Activated CD4-positive, alpha-beta T cell treated with anti-CD3 and anti-CD28 coated beads for 36 hours (primary cell): ENCODE measurements at regions of chr13 and their contacts with region 1.

Region 1: DNA sequence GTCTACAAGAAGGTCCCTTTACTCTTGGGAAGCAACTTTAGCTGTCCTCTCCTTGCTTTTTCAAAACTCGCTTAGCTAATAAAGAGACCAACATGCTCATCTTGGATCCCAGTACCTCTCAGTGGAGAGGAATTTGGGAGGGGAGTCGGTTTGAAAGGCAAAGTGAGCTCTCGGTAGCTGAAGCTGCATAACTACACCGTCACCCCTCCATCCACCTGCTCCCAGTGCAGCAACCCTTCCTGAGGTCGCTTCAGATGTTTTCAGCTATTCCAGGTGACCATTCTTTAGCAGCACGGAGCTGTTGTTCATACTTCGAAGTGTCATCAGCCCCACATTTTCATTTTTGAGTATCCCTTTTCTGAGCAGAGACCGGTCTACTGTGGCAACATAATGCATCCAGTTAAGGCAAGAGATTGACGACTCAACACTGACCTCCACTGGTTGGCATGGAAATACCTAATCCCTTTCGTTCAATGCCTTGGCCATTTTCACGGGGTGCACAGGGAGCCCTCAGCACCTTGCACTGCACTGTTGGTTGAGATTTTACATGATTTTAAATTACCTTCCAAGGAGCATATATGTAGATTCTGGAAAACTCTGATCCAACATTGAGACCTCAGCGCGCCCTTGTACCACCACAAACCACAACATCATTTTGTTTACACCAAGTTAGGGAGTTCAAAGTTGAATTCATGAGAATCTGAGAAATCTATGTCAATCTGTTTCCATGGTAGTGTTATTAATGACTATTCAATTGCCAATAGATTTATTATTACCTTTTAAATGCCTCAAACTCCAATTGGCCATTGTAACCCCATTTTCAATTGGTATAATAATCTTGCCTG is 42.2 kb downstream of the DLEU7 start:
- DNase-seq: peak; percentile 78
- ATAC-seq: peak; percentile 96
- H3K4me3 Mint-ChIP-seq: no peak overlapping the region
- H3K27ac Mint-ChIP-seq: no peak overlapping the region
- H3K4me1 Mint-ChIP-seq: peaks cover 9% of the 10 kb centered on the region
- H3K27me3 Mint-ChIP-seq: peaks cover 3% of the 10 kb centered on the region

Region 2: GRCh38 chr13:49976314-49977258 is 824.7 kb before region 1 on chr13:
- CTCF ChIA-PET with region 1: interaction called, 11 read pairs
- POLR2A ChIA-PET with region 1: no interaction called
- intact Hi-C with region 1: loop called (anchors 1 kb)
- DNase-seq: peak; percentile 87
- ATAC-seq: peak; percentile 83
- H3K4me3 Mint-ChIP-seq: no peak overlapping the region
- H3K27ac Mint-ChIP-seq: no peak overlapping the region
- H3K4me1 Mint-ChIP-seq: no peaks in the 10 kb centered on the region
- H3K27me3 Mint-ChIP-seq: no peaks in the 10 kb centered on the region

Region 3: GRCh38 chr13:50387051-50387581 is 414.2 kb before region 1 on chr13:
- CTCF ChIA-PET with region 1: no interaction called
- POLR2A ChIA-PET with region 1: no interaction called
- intact Hi-C with region 1: loop called in 1 of 2 experiments (anchors 5 kb)
- DNase-seq: peak; percentile 54
- ATAC-seq: peak; percentile 74
- H3K4me3 Mint-ChIP-seq: no peak overlapping the region
- H3K27ac Mint-ChIP-seq: no peak overlapping the region
- H3K4me1 Mint-ChIP-seq: no peaks in the 10 kb centered on the region
- H3K27me3 Mint-ChIP-seq: no peaks in the 10 kb centered on the region

Region 4: DNA sequence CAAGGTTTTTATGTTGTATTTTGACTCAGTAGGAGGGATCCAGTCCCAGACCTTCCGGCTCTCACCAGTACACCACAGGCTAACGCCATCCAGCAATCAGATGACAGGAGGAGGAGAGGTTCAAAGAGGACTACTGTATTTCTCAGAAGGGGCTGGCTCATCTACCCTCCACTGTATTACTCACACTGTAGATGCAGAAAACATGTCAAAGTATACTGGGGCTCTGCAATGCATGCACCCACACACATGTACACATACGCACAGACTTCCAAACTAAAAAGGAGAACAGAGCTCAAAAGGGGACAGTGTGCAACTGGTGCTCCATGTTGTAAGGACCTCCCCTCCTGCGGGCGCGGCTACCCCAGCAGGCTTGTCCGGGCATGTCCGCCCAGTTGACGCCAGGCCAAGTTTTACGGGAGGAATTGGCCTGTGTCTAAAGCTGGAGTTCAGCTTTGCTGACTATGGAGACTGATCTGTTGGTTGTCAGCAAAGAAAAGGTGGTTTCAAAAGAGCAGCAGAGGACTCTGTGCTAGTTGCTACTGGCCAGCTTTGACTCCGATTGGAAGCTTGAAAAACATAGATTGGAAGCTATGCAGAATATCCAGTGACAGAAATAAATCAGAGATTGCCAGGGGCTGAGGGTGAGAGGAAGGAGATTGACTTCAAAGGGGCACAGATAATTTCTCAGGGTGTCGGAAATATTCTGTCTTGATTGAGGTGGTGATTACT is 272.0 kb before region 1 on chr13:
- CTCF ChIA-PET with region 1: no interaction called
- POLR2A ChIA-PET with region 1: no interaction called
- intact Hi-C with region 1: loop called (anchors 10 kb)
- DNase-seq: peak; percentile 46
- ATAC-seq: peak; percentile 94
- H3K4me3 Mint-ChIP-seq: no peak overlapping the region
- H3K27ac Mint-ChIP-seq: no peak overlapping the region
- H3K4me1 Mint-ChIP-seq: peaks cover 30% of the 10 kb centered on the region
- H3K27me3 Mint-ChIP-seq: no peaks in the 10 kb centered on the region

Region 5: DNA sequence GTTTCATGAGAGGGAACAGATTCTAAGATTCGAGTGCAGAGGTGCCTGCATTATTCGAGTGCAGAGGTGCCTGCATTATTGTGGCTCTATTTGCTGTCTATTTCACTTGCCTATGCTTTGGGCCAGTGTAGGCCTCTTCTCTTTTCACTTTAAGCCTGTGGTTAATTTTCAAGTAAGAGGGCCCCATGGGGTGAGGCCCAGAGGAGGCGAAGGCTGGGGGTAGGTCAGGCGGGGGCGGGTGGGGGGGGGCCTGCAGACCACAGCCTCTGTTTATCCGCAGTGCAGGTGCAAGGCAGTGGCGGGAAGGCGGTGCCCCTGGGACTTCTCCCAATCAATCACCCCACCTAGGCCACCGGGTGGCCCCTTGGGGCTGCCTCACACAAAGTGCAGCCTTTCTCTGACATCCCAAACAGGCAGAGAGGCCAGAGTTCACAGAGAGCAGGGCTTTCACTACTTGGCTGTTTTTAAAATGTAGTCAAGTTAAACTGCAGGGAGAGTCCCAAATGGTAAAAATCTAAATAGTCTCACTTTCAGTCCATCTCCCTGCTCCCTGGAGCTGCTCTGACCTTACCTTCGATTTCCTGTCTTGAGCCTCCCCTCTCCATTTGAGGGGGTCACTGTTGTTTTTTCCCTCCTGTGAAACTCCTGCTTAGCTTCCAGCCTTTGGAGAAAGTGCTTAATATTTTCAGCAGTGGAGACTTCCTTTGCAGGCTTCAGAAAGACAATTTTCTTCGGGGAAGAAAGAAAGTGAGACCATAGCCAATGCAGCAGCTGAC is 206.8 kb before region 1 on chr13:
- CTCF ChIA-PET with region 1: interaction called, 5 read pairs
- POLR2A ChIA-PET with region 1: no interaction called
- intact Hi-C with region 1: loop called in 1 of 2 experiments (anchors 1 kb)
- DNase-seq: peak; percentile 66
- ATAC-seq: peak; percentile 83
- H3K4me3 Mint-ChIP-seq: no peak overlapping the region
- H3K27ac Mint-ChIP-seq: peak overlapping the region; percentile 80
- H3K4me1 Mint-ChIP-seq: peaks cover 29% of the 10 kb centered on the region
- H3K27me3 Mint-ChIP-seq: no peaks in the 10 kb centered on the region

Region 6: GRCh38 chr13:51070005-51070649 is 268.8 kb after region 1 on chr13:
- CTCF ChIA-PET with region 1: no interaction called
- POLR2A ChIA-PET with region 1: no interaction called
- intact Hi-C with region 1: loop called (anchors 1 to 10 kb)
- DNase-seq: peak; percentile 89
- ATAC-seq: peak; percentile 96
- H3K4me3 Mint-ChIP-seq: no peak overlapping the region
- H3K27ac Mint-ChIP-seq: no peak overlapping the region
- H3K4me1 Mint-ChIP-seq: peaks cover 7% of the 10 kb centered on the region
- H3K27me3 Mint-ChIP-seq: peaks cover 16% of the 10 kb centered on the region